Activated CD4-positive, alpha-beta memory T cell treated with anti-CD3 and anti-CD28 coated beads for 36 hours (primary cell): ENCODE measurements at regions of chr6 and their contacts with region 1.

Region 1: GRCh38 chr6:79949233-79949632 is 1.9 kb upstream of the ELOVL4 start:
- DNase-seq: peak; percentile 68
- H3K4me3 Mint-ChIP-seq: no peak overlapping the region
- H3K27ac Mint-ChIP-seq: no peak overlapping the region
- H3K4me1 Mint-ChIP-seq: peaks cover 15% of the 10 kb centered on the region
- H3K27me3 Mint-ChIP-seq: peaks cover 22% of the 10 kb centered on the region

Region 2: DNA sequence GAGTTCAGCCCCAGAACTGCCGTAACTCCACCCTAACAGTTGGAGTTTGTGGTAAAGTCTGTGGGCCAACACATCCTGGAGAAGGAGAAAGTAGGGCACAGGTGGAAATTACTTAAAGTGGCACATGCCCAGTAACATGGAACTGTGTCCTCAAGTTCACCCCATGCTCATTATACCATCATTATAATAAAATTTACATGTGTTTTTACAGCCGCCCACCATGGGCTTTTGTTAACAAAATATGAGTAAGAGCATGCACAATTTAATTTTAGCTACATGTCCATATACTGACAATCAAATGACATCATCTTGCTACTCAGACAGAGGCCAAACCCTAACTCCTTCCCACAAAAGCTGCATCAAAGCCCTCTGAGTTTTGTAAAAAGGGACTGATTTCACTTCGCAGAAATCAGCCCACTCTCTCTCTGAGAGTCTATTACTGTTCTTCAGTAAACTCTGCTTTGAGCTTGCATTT is 15.4 kb after region 1 on chr6:
- CTCF ChIA-PET with region 1: interaction called, 16 read pairs
- POLR2A ChIA-PET with region 1: interaction called, 4 read pairs
- intact Hi-C with region 1: no loop called
- DNase-seq: no peak
- H3K4me3 Mint-ChIP-seq: no peak overlapping the region
- H3K27ac Mint-ChIP-seq: peak overlapping the region; percentile 28
- H3K4me1 Mint-ChIP-seq: no peaks in the 10 kb centered on the region
- H3K27me3 Mint-ChIP-seq: peaks cover 9% of the 10 kb centered on the region

Region 3: DNA sequence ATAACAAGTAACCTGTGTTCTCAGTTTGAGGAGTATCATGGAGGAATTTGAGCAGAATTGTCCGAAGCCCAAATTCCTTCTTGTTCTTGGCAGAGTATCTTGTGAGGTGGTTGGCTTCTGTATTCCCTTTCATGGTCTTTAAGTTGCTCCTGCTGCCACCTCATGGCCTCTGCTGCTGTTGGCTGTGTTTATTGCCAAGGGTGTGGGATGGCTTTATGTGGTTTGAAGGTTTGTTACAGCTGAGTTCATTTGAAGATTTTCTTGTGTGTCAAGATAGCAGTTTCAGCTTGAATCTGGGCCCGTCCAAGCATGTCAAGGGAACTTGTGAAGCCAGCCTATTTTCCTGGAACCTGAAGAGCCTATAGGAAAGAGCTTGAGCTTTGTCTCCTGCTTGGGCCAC is 35.0 kb after region 1 on chr6:
- CTCF ChIA-PET with region 1: interaction called, 18 read pairs
- POLR2A ChIA-PET with region 1: no interaction called
- intact Hi-C with region 1: loop called (anchors 1 kb)
- DNase-seq: peak; percentile 23
- H3K4me3 Mint-ChIP-seq: no peak overlapping the region
- H3K27ac Mint-ChIP-seq: no peak overlapping the region
- H3K4me1 Mint-ChIP-seq: no peaks in the 10 kb centered on the region
- H3K27me3 Mint-ChIP-seq: peaks cover 2% of the 10 kb centered on the region

Region 4: GRCh38 chr6:80004173-80005072 is 55.2 kb after region 1 on chr6 and contains the start of gene TTK:
- CTCF ChIA-PET with region 1: interaction called, 9 read pairs
- POLR2A ChIA-PET with region 1: interaction called, 3 read pairs
- intact Hi-C with region 1: loop called (anchors 1 kb)
- DNase-seq: peak; percentile 94
- H3K4me3 Mint-ChIP-seq: peak within 1 kb of the TSS; percentile 94
- H3K27ac Mint-ChIP-seq: peak within 1 kb of the TSS; percentile 86
- H3K4me1 Mint-ChIP-seq: peaks cover 28% of the 10 kb centered on the region
- H3K27me3 Mint-ChIP-seq: peaks cover 3% of the 10 kb centered on the region
- total RNA-seq, gene TTK: 37.2 to 39.4 TPM

Region 5: DNA sequence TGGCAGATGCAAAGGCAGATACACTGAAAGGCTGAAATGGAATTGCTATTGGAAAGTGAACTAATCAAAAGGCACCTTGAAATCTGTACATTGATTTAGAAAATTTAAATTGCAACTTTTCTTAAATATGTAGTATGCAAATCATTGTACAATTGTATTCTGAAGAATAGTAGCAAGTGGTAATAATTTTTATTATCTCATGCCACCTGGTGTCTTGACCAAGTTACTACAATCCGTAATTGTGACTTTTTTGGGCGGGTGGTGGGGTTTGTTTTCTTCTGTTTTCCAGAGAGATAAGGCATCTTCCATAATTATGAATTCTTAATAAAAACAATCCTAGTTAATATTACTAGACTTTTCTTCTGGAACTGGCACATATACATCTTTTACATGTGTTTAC is 144.8 kb after region 1 on chr6:
- CTCF ChIA-PET with region 1: interaction called, 82 read pairs
- POLR2A ChIA-PET with region 1: no interaction called
- intact Hi-C with region 1: loop called (anchors 1 kb)
- DNase-seq: no peak
- H3K4me3 Mint-ChIP-seq: no peak overlapping the region
- H3K27ac Mint-ChIP-seq: no peak overlapping the region
- H3K4me1 Mint-ChIP-seq: no peaks in the 10 kb centered on the region
- H3K27me3 Mint-ChIP-seq: peaks cover 2% of the 10 kb centered on the region

Region 6: GRCh38 chr6:80106418-80107235 is 157.4 kb after region 1 on chr6 and contains the start of gene BCKDHB:
- CTCF ChIA-PET with region 1: interaction called, 15 read pairs
- POLR2A ChIA-PET with region 1: interaction called, 4 read pairs
- intact Hi-C with region 1: loop called (anchors 1 kb)
- DNase-seq: peak; percentile 99
- H3K4me3 Mint-ChIP-seq: peak within 1 kb of the TSS; percentile 94
- H3K27ac Mint-ChIP-seq: peak within 1 kb of the TSS; percentile 80
- H3K4me1 Mint-ChIP-seq: peaks cover 15% of the 10 kb centered on the region
- H3K27me3 Mint-ChIP-seq: no peaks in the 10 kb centered on the region
- total RNA-seq, gene BCKDHB: 16.4 to 17.7 TPM

Region 7: GRCh38 chr6:80163658-80164187 is 214.5 kb after region 1 on chr6:
- CTCF ChIA-PET with region 1: interaction called, 5 read pairs
- POLR2A ChIA-PET with region 1: no interaction called
- intact Hi-C with region 1: loop called (anchors 5 kb)
- DNase-seq: peak; percentile 11
- H3K4me3 Mint-ChIP-seq: no peak overlapping the region
- H3K27ac Mint-ChIP-seq: no peak overlapping the region
- H3K4me1 Mint-ChIP-seq: peaks cover 14% of the 10 kb centered on the region
- H3K27me3 Mint-ChIP-seq: no peaks in the 10 kb centered on the region